ENCODE measurements at regions of chr13 and their contacts with region 1.

Region 1: GRCh38 chr13:114119196-114119595 is 13.2 kb downstream of the RASA3 start:
- DNase-seq: no peak
- H3K4me3 ChIP-seq: peak overlapping the region; percentile 42
- CTCF ChIP-seq: no peak

Region 2: GRCh38 chr13:113916330-113916815 is 202.8 kb before region 1 on chr13:
- CTCF ChIA-PET with region 1: no interaction called
- POLR2A ChIA-PET with region 1: no interaction called
- DNase-seq: no peak
- H3K4me3 ChIP-seq: no peak overlapping the region
- CTCF ChIP-seq: no peak

Region 3: DNA sequence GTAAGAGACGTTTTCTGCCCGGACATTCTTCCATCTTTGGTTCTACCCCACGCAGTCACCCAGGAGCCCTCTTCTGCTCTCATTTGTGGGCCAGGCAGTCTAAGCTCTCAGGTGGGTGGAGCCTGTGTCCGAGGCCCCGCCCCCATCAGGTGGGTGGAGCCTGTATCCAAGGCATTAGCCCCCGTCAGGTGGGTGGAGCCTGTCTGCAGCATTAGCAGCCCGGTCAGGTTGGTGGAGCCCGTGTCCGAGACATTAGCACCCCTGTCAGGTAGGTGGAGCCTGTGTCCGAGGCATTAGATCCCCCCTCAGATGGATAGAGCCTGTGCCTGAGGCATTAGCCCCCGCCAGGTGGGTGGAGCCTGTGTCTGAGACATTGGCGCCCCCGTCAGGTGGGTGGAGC is 99.8 kb before region 1 on chr13:
- CTCF ChIA-PET with region 1: no interaction called
- POLR2A ChIA-PET with region 1: no interaction called
- DNase-seq: no peak
- H3K4me3 ChIP-seq: no peak overlapping the region
- CTCF ChIP-seq: no peak

Region 4: GRCh38 chr13:114065141-114065925 is 53.9 kb before region 1 on chr13:
- CTCF ChIA-PET with region 1: no interaction called
- POLR2A ChIA-PET with region 1: interaction called, 11 read pairs
- DNase-seq: peak; percentile 89
- H3K4me3 ChIP-seq: peak overlapping the region; percentile 46
- CTCF ChIP-seq: peak; percentile 15

Region 5: DNA sequence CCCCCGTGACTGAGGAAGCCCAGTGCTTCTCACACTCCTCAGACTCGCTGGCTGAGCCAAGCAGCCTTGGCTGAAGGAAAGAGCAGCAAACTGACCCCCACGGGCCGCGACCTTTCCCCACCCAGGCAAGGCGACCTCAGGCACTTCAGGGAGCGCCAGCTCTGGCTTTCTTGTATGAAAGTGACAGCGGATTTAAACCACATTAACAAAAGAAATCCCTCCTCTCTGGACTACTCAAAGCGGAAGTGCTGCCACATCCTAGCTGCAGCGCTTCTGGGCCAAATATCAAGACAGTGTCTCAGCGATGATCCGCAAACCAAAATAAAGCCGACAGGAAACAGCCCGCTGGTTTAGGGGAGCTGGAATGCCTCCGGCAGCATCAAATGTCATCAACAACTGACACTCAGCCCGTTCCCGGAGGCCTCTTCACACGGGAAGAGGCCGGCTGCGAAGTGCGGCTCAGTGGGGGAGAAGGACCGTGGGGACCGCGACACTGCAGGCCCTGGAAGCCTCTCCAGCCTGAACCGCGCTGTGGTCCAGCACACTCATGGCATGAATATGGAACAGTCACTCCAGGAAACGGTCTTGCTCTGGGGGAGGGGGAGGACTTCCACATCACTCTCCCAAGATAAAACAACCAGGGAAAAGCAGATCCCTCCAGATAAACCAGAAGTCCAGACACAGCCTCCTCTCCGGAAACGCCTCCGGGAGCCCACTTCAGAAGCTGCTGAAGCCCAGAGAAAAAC is 11.8 kb after region 1 on chr13:
- CTCF ChIA-PET with region 1: interaction called, 4 read pairs
- POLR2A ChIA-PET with region 1: interaction called, 14 read pairs
- DNase-seq: no peak
- H3K4me3 ChIP-seq: peak overlapping the region; percentile 89
- CTCF ChIP-seq: no peak

Measured in AG04449 (cell line).